ENCODE measurements at regions of chr17 and their contacts with region 1.

Region 1: DNA sequence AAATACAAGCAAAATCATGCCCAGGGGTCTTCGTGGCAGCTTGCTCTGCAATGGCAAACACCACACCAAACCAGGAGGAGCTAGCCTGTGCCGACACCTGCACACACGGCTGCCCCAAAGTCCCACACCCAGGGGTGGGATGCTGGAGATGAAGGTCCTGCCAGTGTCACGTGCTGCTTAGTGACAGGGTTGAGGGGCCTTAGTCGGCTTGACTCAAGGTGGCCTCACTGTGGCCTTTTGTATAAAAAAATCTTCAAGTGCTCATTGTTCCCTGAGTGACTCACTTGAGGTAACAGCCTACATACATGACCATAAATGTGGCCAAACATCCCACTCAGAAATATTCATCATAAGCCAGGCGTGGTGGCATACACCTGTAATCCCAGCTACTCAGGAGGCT is 7.3 kb downstream of the TRIM65 start:
- DNase-seq: no peak
- ATAC-seq: no peak
- H3K4me3 Mint-ChIP-seq: no peak overlapping the region
- H3K27ac Mint-ChIP-seq: peak overlapping the region; percentile 6
- H3K4me1 Mint-ChIP-seq: peaks cover 8% of the 10 kb centered on the region
- H3K27me3 Mint-ChIP-seq: no peaks in the 10 kb centered on the region

Region 2: GRCh38 chr17:75877752-75878173 is 11.7 kb before region 1 on chr17:
- CTCF ChIA-PET with region 1: interaction called, 101 read pairs
- DNase-seq: peak; percentile 82
- ATAC-seq: peak; percentile 82
- H3K4me3 Mint-ChIP-seq: peak overlapping the region; percentile 88
- H3K27ac Mint-ChIP-seq: peak overlapping the region; percentile 91
- H3K4me1 Mint-ChIP-seq: peaks cover 37% of the 10 kb centered on the region
- H3K27me3 Mint-ChIP-seq: peaks cover 28% of the 10 kb centered on the region

Region 3: GRCh38 chr17:75914643-75915267 is 25.3 kb after region 1 on chr17:
- CTCF ChIA-PET with region 1: no interaction called
- DNase-seq: no peak
- ATAC-seq: no peak
- H3K4me3 Mint-ChIP-seq: no peak overlapping the region
- H3K27ac Mint-ChIP-seq: no peak overlapping the region
- H3K4me1 Mint-ChIP-seq: peaks cover 10% of the 10 kb centered on the region
- H3K27me3 Mint-ChIP-seq: no peaks in the 10 kb centered on the region

Measured in activated CD8-positive, alpha-beta memory T cell treated with anti-CD3 and anti-CD28 coated beads, Interleukin-2, amount 10 ng/mL, durations not matched to agents 7 days and 5 days (primary cell).